IMR-90 (cell line): ENCODE measurements at regions of chr4 and their contacts with region 1.

Region 1: DNA sequence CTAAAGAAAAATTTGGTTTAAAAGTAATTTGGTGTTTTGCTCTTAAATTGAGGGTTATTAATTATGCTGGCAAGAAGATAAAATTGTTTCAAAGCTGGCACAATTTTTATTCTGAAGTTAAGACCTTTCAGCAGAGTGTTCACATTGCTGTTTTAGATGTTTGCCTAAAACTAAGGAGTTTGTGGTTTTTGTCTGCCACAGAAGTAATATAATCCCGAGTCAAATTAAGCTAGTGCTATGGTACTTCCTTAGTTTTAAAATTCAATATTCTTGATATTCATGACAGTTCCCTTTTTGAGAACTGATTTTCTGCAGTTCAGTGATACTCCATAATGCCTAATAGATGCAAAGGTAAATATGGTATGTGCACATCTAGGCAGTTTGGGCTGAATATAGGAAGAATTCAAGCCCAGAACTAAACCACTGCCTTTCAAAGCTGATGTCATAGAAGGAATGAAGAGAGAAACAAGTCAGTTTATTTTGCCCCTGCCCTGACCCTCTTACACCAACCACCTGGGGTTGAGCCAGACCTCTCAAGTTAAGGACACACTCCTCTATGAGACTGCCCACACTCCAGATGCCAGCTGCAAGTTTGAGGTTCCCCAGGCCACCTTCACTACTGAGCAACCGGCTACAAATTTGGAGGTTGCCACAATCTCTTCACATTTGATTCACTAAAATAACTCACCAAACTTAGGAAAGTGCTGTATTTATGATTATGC is 32.1 kb upstream of the VEGFC start:
- DNase-seq: no peak
- ATAC-seq: no peak; the same call in 1 of the 2 replicates
- H3K4me3 ChIP-seq: no peak overlapping the region
- H3K27ac ChIP-seq: no peak overlapping the region
- H3K4me1 ChIP-seq: peaks cover 5% of the 10 kb centered on the region; the same call in 1 of the 2 replicates
- H3K27me3 ChIP-seq: no peaks in the 10 kb centered on the region
- CTCF ChIP-seq: no peak
- POLR2A ChIP-seq: no peak
- RAD21 ChIP-seq: no peak

Region 2: DNA sequence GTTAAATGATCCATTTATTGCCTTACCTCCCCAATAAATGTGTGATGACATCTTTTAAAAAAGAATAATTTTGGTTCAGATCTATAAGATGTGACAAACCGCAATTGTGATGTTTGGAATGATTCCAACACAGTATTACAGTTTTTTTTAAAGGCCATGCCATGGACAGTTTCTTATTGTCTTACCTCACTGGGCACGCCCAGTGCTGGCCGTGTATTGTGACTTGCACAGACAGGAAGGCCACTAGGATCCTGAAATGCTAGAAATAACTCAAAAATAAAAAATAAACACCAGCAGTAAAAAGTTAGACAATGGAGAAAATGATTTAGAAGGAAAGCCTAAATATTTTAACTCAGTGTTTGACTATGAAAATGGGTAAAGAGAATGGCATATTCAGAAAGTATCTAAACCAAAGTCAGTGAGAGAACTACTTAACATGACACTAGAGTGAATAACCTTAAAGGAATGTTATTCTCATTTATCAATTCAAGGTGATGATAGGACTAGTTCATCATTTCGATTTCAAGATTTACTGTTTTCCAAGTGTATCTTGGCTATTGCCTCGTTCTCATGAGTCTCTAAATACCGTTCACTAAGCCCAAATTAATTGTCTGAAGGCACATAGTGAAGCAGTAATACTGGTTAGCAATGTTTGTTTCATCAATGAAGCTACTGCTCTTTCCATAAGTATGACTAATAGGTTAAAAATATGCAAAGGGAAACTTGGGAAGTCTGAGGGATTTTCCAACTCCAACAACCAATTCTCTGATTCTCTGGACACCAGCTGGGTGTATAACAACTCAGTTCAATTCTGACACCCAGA is 14.0 kb after region 1 on chr4:
- CTCF ChIA-PET with region 1: no interaction called
- POLR2A ChIA-PET with region 1: interaction called, 14 read pairs
- dilution Hi-C with region 1: no loop called
- in situ Hi-C with region 1: no loop called
- intact Hi-C with region 1: no loop called
- DNase-seq: peak; percentile 84
- ATAC-seq: peak; percentile 82
- H3K4me3 ChIP-seq: no peak overlapping the region
- H3K27ac ChIP-seq: peak overlapping the region; percentile 30; the same call in 1 of the 2 replicates
- H3K4me1 ChIP-seq: peaks cover 9% of the 10 kb centered on the region
- H3K27me3 ChIP-seq: no peaks in the 10 kb centered on the region
- CTCF ChIP-seq: no peak
- POLR2A ChIP-seq: no peak
- RAD21 ChIP-seq: no peak